AG04449 (cell line): ENCODE measurements at regions of chr20 and their contacts with region 1.

Region 1: GRCh38 chr20:39849664-39850063 is 839.4 kb downstream of the MAFB start:
- DNase-seq: peak; percentile 74
- H3K4me3 ChIP-seq: no peak overlapping the region
- CTCF ChIP-seq: no peak

Region 2: GRCh38 chr20:39736434-39737327 is 113.0 kb before region 1 on chr20:
- CTCF ChIA-PET with region 1: no interaction called
- POLR2A ChIA-PET with region 1: no interaction called
- DNase-seq: no peak
- H3K4me3 ChIP-seq: no peak overlapping the region
- CTCF ChIP-seq: no peak

Region 3: DNA sequence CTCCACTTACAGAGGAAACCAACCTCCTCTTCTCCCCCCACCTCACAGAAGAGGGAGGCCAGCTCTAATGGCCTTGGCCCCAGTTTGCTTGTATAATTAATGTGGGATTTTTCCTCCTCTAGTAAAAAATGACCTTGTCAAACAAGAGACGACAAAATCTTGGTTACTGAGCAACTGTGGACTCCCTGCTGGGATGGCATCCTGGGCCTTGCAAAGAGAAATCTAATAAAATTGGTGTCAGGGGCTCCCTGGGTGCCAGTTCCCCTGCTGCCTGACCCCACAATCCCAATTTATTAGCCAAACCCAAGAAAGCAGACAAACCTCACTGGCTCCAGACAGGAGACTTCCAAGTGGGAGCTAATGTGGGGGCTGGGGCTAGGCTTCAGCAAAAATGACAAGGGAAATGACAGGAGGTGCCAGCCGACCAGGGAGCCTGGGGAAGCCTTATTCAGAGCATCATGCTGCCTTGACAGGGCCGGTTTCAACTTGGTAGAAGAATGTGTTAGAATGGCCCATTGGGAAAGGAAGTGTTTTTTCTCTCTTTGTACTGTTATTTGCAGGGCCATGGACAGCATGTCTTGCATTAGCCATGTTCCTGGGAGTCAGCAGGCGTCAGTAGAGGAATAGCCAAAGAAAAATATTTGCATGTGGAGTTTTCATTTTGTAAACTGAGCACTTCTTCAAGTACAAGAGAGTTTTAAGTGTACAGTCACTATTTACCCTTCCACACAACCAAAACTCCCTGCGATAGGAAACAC is 70.6 kb before region 1 on chr20:
- CTCF ChIA-PET with region 1: no interaction called
- POLR2A ChIA-PET with region 1: no interaction called
- DNase-seq: no peak
- H3K4me3 ChIP-seq: no peak overlapping the region
- CTCF ChIP-seq: peak; percentile 14

Region 4: GRCh38 chr20:39829256-39829655 is 20.4 kb before region 1 on chr20:
- CTCF ChIA-PET with region 1: interaction called, 27 read pairs
- POLR2A ChIA-PET with region 1: no interaction called
- DNase-seq: no peak
- H3K4me3 ChIP-seq: no peak overlapping the region
- CTCF ChIP-seq: peak; percentile 72

Region 5: GRCh38 chr20:39967806-39968205 is 118.1 kb after region 1 on chr20:
- CTCF ChIA-PET with region 1: no interaction called
- POLR2A ChIA-PET with region 1: no interaction called
- DNase-seq: no peak
- H3K4me3 ChIP-seq: no peak overlapping the region
- CTCF ChIP-seq: no peak